ENCODE measurements at regions of chr9 and their contacts with region 1.

Region 1: GRCh38 chr9:75624998-75625397 is 265.5 kb upstream of the PCSK5 start:
- DNase-seq: no peak
- ATAC-seq: peak in 5 of 8 donors; percentile 11 to 68 (median 17)
- H3K4me3 ChIP-seq: no peak overlapping the region
- H3K27ac ChIP-seq: no peak overlapping the region
- H3K4me1 ChIP-seq: peaks cover 0 to 9% (median 0%) of the 10 kb centered on the region in 9 donors
- H3K27me3 ChIP-seq: no peaks in the 10 kb centered on the region
- CTCF ChIP-seq: no peak

Region 2: DNA sequence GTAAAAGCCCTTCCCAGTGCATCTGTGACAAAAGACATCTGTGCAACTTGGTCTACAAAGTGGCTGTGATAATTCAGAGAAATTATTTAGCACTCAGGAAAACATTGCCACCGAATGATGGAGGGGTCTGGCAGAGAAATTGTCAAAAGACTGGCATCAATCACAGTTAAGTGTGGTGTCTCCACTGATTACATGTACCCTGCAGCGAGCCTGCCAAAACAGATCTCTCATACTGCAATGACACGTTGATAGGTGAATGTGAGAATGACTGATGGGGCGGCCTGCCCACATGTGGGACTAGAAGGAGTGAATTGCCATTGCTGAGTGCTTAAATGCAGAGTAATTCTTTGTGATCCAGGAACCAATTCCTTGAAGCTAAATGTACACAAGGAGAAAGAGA is 129.1 kb after region 1 on chr9:
- intact Hi-C with region 1: loop called in 1 of 10 experiments (anchors 10 kb)
- DNase-seq: peak; percentile 53 to 60
- ATAC-seq: peak; percentile 76 to 99 (median 96)
- H3K4me3 ChIP-seq: no peak overlapping the region
- H3K27ac ChIP-seq: no peak overlapping the region
- H3K4me1 ChIP-seq: peaks cover 0 to 6% (median 0%) of the 10 kb centered on the region in 9 donors
- H3K27me3 ChIP-seq: no peaks in the 10 kb centered on the region
- CTCF ChIP-seq: no peak

Measured in heart right ventricle (tissue), 16 donors.